ENCODE measurements at regions of chr17 and their contacts with region 1.

Region 1: DNA sequence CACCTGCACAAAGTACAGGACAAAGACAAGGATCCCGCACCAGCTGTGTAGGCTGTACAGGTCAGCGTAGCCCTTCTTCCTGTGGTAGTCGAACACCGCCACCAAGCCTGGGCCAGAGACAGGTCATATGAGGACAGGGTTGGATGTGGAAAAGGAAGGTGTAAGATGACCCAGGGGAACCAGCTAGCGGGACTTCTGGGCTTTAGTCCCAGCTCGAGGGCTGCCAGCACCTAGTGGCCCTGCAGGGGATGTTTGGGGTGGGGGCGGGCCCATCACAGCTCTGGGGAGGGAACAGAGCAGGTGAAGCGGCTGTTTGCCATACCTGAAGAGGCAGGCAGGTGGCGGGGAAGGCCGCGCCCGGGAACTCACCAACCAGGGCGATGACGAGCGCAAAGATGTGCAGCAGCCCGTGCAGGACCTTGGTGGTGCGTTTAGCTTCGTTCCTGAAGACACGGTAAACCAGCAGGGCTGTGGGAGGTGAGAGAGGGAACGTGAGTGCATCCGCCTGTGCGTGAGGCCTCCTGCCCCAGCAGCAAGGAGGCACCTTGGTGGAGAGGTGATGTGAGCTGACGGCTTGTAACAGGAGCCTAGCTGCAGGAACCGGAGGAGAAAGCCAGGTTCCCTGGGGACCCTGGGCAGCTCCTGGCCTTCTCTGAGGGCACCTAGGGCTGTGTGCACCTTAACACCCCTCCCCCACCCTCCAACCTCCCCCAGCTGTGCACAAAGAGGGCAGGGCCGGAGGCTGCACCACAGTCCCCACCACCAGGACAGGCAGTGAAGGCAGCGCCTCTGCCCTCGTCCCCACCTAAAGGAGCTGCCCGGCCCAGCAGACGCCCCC is 10.2 kb downstream of the CYB561 start:
- DNase-seq: no peak
- ATAC-seq: peak; percentile 2 to 53 (median 20)
- H3K4me3 ChIP-seq: no peak overlapping the region
- H3K27ac ChIP-seq: no peak overlapping the region
- H3K4me1 ChIP-seq: peaks cover 11% of the 10 kb centered on the region
- H3K27me3 ChIP-seq: peaks cover 0 to 8% (median 2%) of the 10 kb centered on the region in 3 donors
- CTCF ChIP-seq: no peak

Region 2: GRCh38 chr17:62911114-62911513 is 524.8 kb before region 1 on chr17:
- intact Hi-C with region 1: no loop called
- DNase-seq: no peak
- ATAC-seq: no peak
- H3K4me3 ChIP-seq: no peak overlapping the region
- H3K27ac ChIP-seq: no peak overlapping the region
- H3K4me1 ChIP-seq: no peaks in the 10 kb centered on the region
- H3K27me3 ChIP-seq: no peaks in the 10 kb centered on the region
- CTCF ChIP-seq: no peak

Region 3: GRCh38 chr17:63412234-63412633 is 23.7 kb before region 1 on chr17:
- intact Hi-C with region 1: loop called in 1 of 2 experiments (anchors 2 kb)
- DNase-seq: no peak
- ATAC-seq: no peak
- H3K4me3 ChIP-seq: no peak overlapping the region
- H3K27ac ChIP-seq: no peak overlapping the region
- H3K4me1 ChIP-seq: no peaks in the 10 kb centered on the region
- H3K27me3 ChIP-seq: no peaks in the 10 kb centered on the region
- CTCF ChIP-seq: no peak

Region 4: DNA sequence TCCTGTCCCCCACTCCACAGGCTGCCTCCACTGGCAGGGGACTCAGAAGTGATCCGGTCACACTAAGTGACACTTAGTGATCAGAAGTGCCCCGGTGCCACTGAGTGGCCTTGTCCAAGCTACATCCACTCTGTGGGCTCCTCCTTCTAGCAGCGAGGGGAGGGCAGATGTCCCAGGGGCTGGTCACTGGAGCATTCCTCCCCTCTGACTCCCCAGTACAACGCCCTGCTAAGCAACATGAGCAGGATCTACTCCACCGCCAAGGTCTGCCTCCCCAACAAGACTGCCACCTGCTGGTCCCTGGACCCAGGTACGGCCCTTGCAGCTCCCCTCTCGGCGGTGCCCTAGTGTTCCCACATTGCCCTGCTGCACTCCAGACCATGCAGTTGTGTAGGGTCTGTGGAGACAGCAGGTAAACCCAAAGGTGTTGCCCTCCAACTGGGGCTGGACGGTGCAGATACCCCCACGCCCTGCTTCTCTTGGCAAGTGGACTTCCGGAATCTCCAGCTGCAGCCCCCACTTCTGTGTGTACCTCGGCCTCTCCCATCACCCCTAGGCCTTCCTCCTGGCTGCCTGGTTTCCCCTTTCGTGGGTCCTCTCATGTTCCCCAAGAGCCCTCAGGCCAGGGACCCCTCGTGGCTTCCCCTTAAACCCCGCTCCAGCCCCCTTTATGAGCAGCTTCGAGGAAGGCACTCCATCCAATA is 43.0 kb after region 1 on chr17:
- intact Hi-C with region 1: no loop called
- DNase-seq: peak; percentile 76 to 86
- ATAC-seq: peak; percentile 74 to 88 (median 82)
- H3K4me3 ChIP-seq: peak overlapping the region; percentile 63
- H3K27ac ChIP-seq: no peak overlapping the region
- H3K4me1 ChIP-seq: peaks cover 11% of the 10 kb centered on the region
- H3K27me3 ChIP-seq: peaks cover 0 to 43% (median 15%) of the 10 kb centered on the region in 3 donors
- CTCF ChIP-seq: peak; percentile 60